SK-N-SH (cell line): ENCODE measurements at regions of chr4 and their contacts with region 1.

Region 1: GRCh38 chr4:128553686-128554515 is 255.6 kb upstream of the JADE1 start:
- DNase-seq: peak; percentile 12
- H3K4me3 ChIP-seq: peak overlapping the region; percentile 51 to 66
- H3K27ac ChIP-seq: peak overlapping the region; percentile 93 to 99
- H3K4me1 ChIP-seq: peaks cover 12 to 32% of the 10 kb centered on the region in 2 experiments
- H3K27me3 ChIP-seq: no peaks in the 10 kb centered on the region
- CTCF ChIP-seq: no peak
- EP300 ChIP-seq: no peak; a peak in 1 of 4 replicates
- RAD21 ChIP-seq: no peak

Region 2: GRCh38 chr4:128565054-128565453 is 11.2 kb after region 1 on chr4:
- CTCF ChIA-PET with region 1: interaction called, 3 read pairs
- POLR2A ChIA-PET with region 1: interaction called, 14 read pairs
- DNase-seq: no peak
- H3K4me3 ChIP-seq: no peak overlapping the region
- H3K27ac ChIP-seq: no peak overlapping the region
- H3K4me1 ChIP-seq: peaks cover 4% of the 10 kb centered on the region in 2 experiments
- H3K27me3 ChIP-seq: no peaks in the 10 kb centered on the region
- CTCF ChIP-seq: no peak
- EP300 ChIP-seq: no peak
- RAD21 ChIP-seq: no peak

Region 3: GRCh38 chr4:128630871-128631270 is 77.0 kb after region 1 on chr4:
- CTCF ChIA-PET with region 1: no interaction called
- POLR2A ChIA-PET with region 1: no interaction called
- DNase-seq: no peak
- H3K4me3 ChIP-seq: no peak overlapping the region
- H3K27ac ChIP-seq: no peak overlapping the region
- H3K4me1 ChIP-seq: no peaks in the 10 kb centered on the region
- H3K27me3 ChIP-seq: no peaks in the 10 kb centered on the region
- CTCF ChIP-seq: no peak
- EP300 ChIP-seq: no peak
- RAD21 ChIP-seq: no peak

Region 4: GRCh38 chr4:128809477-128810330 is 255.8 kb after region 1 on chr4 and contains the start of gene JADE1:
- CTCF ChIA-PET with region 1: interaction called, 7 read pairs
- POLR2A ChIA-PET with region 1: interaction called, 14 read pairs
- DNase-seq: peak; percentile 92
- H3K4me3 ChIP-seq: peak within 1 kb of the TSS; percentile 88 to 97
- H3K27ac ChIP-seq: peak within 1 kb of the TSS; percentile 94 to 97
- H3K4me1 ChIP-seq: peaks cover 4 to 7% of the 10 kb centered on the region in 2 experiments; a peak in 3 of 4 replicates
- H3K27me3 ChIP-seq: no peaks in the 10 kb centered on the region
- CTCF ChIP-seq: peak; percentile 69
- EP300 ChIP-seq: no peak; a peak in 1 of 4 replicates
- RAD21 ChIP-seq: peak; percentile 88
- polyA plus RNA-seq, gene JADE1: 9.1 and 10.9 TPM in 2 replicates